ENCODE measurements at regions of chr2 and their contacts with region 1.

Region 1: DNA sequence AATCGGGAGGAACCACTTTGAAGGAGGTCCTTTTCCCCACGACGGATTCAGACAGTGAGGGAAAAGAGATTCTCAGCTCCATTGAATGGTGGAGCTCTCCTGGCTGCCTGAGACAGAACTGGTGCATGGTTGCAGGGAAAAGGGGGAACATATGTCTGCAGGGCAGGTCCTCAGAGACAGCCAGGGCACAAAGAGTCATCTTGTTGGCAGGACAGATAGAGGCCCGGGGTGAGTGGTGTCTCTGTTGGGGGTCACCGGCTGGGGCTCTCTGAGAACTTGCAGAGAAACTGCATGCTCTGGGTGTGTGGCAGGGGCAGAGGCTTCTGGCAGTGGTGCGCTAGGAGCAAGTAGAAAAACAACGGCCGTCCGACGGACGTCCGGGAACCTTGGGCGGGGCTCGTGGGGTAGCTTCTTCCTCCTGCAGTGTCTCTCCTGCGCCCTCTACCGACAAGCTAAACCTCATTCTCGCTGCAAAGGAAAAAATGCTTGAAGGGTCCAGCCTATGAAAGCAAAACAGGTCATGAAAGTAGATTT is 94.3 kb downstream of the CDCA7 start:
- DNase-seq: peak; percentile 65 to 91 (median 73)
- ATAC-seq: peak; percentile 99
- H3K4me3 ChIP-seq: no peak overlapping the region
- H3K27ac ChIP-seq: no peak overlapping the region
- H3K4me1 ChIP-seq: no peaks in the 10 kb centered on the region
- H3K27me3 ChIP-seq: peaks cover 12 to 23% of the 10 kb centered on the region in 2 experiments; a peak in 4 of 5 replicates
- CTCF ChIP-seq: peak; percentile 87 to 92 (median 91)
- EP300 ChIP-seq: no peak
- POLR2A ChIP-seq: no peak
- RAD21 ChIP-seq: peak; percentile 60 to 83

Region 2: GRCh38 chr2:173286153-173286809 is 162.7 kb before region 1 on chr2:
- CTCF ChIA-PET with region 1: no interaction called
- POLR2A ChIA-PET with region 1: no interaction called
- in situ Hi-C with region 1: no loop called
- intact Hi-C with region 1: loop called (anchors 5 kb)
- DNase-seq: peak in 2 of 4 experiments; percentile 30 to 38
- ATAC-seq: peak; percentile 82
- H3K4me3 ChIP-seq: no peak overlapping the region
- H3K27ac ChIP-seq: no peak overlapping the region
- H3K4me1 ChIP-seq: peaks cover 8 to 11% of the 10 kb centered on the region in 2 experiments; a peak in 4 of 5 replicates
- H3K27me3 ChIP-seq: no peaks in the 10 kb centered on the region
- CTCF ChIP-seq: peak in 1 of 3 experiments; percentile 42; a peak in 1 of 6 replicates
- EP300 ChIP-seq: no peak
- POLR2A ChIP-seq: no peak
- RAD21 ChIP-seq: peak in 1 of 2 experiments; percentile 37; a peak in 2 of 4 replicates

Region 3: DNA sequence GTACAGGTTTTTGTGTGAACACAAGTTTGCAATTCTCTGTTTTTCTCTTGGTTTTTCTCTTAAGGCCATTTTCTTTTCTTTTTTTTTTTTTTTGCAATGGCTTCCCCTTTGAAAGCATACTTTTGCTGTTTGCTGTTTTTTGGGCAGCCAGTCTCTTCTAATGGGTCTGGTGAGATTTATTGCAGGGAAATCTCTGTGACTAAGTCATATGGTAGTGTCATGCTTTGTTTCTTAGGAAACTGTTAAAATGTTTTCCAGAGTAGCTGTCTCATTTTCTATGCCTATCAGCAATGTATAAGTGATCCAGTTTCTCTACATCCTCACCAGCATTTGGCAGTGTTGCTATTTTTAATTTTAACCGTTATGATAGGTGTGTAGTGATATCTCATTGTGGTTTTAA is 122.2 kb before region 1 on chr2:
- CTCF ChIA-PET with region 1: no interaction called
- POLR2A ChIA-PET with region 1: no interaction called
- in situ Hi-C with region 1: no loop called
- intact Hi-C with region 1: no loop called
- DNase-seq: no peak
- ATAC-seq: no peak
- H3K4me3 ChIP-seq: no peak overlapping the region
- H3K27ac ChIP-seq: no peak overlapping the region
- H3K4me1 ChIP-seq: no peaks in the 10 kb centered on the region
- H3K27me3 ChIP-seq: no peaks in the 10 kb centered on the region
- CTCF ChIP-seq: no peak
- EP300 ChIP-seq: no peak
- POLR2A ChIP-seq: no peak
- RAD21 ChIP-seq: no peak

Region 4: DNA sequence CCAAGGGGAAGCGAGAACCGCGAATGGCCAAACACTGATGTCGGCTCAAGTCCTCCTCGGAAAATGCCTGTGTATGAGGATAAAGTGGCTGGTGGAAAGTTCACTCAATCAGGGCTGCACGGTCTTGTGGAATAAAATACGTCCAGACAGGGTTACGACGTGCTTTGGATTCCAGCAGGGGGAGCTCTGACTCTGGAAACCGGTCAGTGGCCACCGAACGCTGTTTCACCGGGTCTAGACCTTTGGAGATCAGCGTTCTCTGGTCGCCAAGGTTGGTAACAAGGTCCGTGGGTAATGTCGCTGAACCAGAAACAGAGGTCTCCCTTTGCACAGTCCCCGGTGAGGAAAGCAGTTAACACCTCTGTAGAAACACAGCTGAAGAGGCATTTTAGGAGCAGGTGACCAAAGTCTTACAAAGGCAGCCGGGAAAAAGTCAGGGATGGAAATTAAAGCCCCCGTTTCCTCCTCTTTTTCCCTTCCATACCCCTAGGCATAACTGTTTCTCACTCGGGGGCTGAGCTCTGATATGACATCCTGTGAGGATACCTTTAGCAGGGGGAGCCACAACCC is 46.5 kb before region 1 on chr2:
- CTCF ChIA-PET with region 1: no interaction called
- POLR2A ChIA-PET with region 1: no interaction called
- in situ Hi-C with region 1: no loop called
- intact Hi-C with region 1: loop called (anchors 1 kb)
- DNase-seq: peak; percentile 71 to 88 (median 80)
- ATAC-seq: peak; percentile 98
- H3K4me3 ChIP-seq: no peak overlapping the region
- H3K27ac ChIP-seq: no peak overlapping the region
- H3K4me1 ChIP-seq: no peaks in the 10 kb centered on the region
- H3K27me3 ChIP-seq: peaks cover 29 to 40% of the 10 kb centered on the region in 2 experiments
- CTCF ChIP-seq: peak; percentile 93 to 96 (median 94)
- EP300 ChIP-seq: no peak
- POLR2A ChIP-seq: no peak
- RAD21 ChIP-seq: peak; percentile 94 to 98

Region 5: GRCh38 chr2:173432049-173432754 is 16.8 kb before region 1 on chr2:
- CTCF ChIA-PET with region 1: no interaction called
- POLR2A ChIA-PET with region 1: no interaction called
- in situ Hi-C with region 1: no loop called
- intact Hi-C with region 1: no loop called
- DNase-seq: no peak
- ATAC-seq: no peak
- H3K4me3 ChIP-seq: no peak overlapping the region
- H3K27ac ChIP-seq: no peak overlapping the region
- H3K4me1 ChIP-seq: no peaks in the 10 kb centered on the region
- H3K27me3 ChIP-seq: peaks cover 34 to 53% of the 10 kb centered on the region in 2 experiments
- CTCF ChIP-seq: no peak
- EP300 ChIP-seq: no peak
- POLR2A ChIP-seq: no peak
- RAD21 ChIP-seq: no peak